Thyroid gland (tissue), 4 donors: ENCODE measurements at regions of chr13 and their contacts with region 1.

Region 1: DNA sequence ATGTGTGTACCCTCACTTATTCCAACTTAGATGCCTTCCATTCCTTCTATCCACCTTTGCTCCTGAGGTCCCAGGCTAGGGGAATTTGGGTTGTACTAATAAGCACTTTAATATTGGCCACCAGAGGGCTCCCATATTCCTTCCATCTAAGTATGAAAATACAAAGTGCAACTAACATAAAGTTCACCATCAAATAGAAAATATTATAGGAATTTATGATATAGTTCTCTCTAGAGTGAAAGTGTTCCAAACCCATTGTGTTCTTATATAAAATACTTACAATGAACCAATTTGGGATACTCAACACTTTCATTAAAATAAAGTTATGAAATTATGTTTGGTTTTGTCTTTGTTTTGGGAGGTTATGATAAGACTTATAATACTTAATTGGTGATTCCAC is 62.3 kb downstream of the ITGBL1 start:
- DNase-seq: peak; percentile 12 to 33
- H3K4me3 ChIP-seq: no peak overlapping the region
- H3K27ac ChIP-seq: no peak overlapping the region
- H3K4me1 ChIP-seq: no peaks in the 10 kb centered on the region
- H3K27me3 ChIP-seq: no peaks in the 10 kb centered on the region
- CTCF ChIP-seq: peak; percentile 38 to 69 (median 54)
- POLR2A ChIP-seq: no peak

Region 2: DNA sequence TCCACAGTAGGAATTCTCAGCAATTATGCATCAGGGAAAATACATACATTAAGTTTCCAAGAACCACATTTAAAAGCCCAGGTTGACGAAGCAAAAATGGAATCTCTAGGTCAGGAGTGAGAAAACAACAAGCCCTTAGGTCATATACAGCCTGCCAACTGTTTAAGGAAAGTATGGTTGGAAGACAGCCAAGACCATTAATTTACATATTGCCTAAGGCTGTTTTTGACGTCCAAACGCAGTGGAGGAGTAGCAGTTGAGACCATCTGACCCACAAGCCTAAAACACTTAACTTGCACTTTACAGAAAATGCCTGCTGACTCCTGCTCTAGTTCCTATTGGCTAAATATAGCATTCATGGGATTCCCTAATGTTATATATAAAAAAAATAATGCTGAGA is 236.7 kb after region 1 on chr13:
- intact Hi-C with region 1: loop called (anchors 5 kb)
- DNase-seq: no peak
- H3K4me3 ChIP-seq: no peak overlapping the region
- H3K27ac ChIP-seq: no peak overlapping the region
- H3K4me1 ChIP-seq: no peaks in the 10 kb centered on the region
- H3K27me3 ChIP-seq: no peaks in the 10 kb centered on the region
- CTCF ChIP-seq: no peak
- POLR2A ChIP-seq: no peak